ENCODE measurements at regions of chr10 and their contacts with region 1.

Region 1: GRCh38 chr10:12710594-12711349 is 290.7 kb downstream of the CCDC3 start:
- DNase-seq: peak; percentile 68
- ATAC-seq: peak; percentile 93
- H3K4me3 Mint-ChIP-seq: no peak overlapping the region
- H3K27ac Mint-ChIP-seq: peak overlapping the region; percentile 54
- H3K4me1 Mint-ChIP-seq: peaks cover 23% of the 10 kb centered on the region
- H3K27me3 Mint-ChIP-seq: no peaks in the 10 kb centered on the region
- CTCF ChIP-seq: no peak

Region 2: GRCh38 chr10:11782793-11783557 is 927.8 kb before region 1 on chr10:
- CTCF ChIA-PET with region 1: interaction called, 7 read pairs
- POLR2A ChIA-PET with region 1: no interaction called
- intact Hi-C with region 1: loop called (anchors 2 kb)
- DNase-seq: no peak
- ATAC-seq: peak; percentile 40
- H3K4me3 Mint-ChIP-seq: no peak overlapping the region
- H3K27ac Mint-ChIP-seq: no peak overlapping the region
- H3K4me1 Mint-ChIP-seq: no peaks in the 10 kb centered on the region
- H3K27me3 Mint-ChIP-seq: peaks cover 5% of the 10 kb centered on the region
- CTCF ChIP-seq: no peak

Region 3: DNA sequence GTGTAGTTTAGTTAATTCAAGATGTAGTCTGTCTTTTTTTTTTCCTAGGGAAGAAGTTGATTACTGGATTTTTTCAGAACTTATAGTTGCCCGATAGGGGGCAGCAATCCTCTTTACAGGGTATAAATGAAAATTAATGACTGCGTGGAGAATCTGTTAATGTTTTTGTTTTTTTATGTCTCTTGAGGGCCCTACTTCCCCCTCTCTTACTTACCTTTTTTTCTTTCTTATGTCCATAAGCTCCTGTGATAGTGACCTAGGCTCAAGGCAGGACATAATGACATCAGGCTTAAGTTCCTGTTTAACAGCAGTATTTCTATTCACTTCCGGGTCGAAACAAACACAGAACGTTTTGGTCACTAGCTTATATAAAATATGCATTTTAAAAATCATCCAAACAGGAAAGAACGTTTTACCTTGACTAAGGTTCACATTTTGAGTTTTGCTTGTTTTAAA is 496.0 kb before region 1 on chr10:
- CTCF ChIA-PET with region 1: interaction called, 65 read pairs
- POLR2A ChIA-PET with region 1: no interaction called
- intact Hi-C with region 1: loop called (anchors 1 kb)
- DNase-seq: no peak
- ATAC-seq: peak; percentile 42
- H3K4me3 Mint-ChIP-seq: peak overlapping the region; percentile 78
- H3K27ac Mint-ChIP-seq: peak overlapping the region; percentile 88
- H3K4me1 Mint-ChIP-seq: peaks cover 19% of the 10 kb centered on the region
- H3K27me3 Mint-ChIP-seq: no peaks in the 10 kb centered on the region
- CTCF ChIP-seq: peak; percentile 66

Region 4: DNA sequence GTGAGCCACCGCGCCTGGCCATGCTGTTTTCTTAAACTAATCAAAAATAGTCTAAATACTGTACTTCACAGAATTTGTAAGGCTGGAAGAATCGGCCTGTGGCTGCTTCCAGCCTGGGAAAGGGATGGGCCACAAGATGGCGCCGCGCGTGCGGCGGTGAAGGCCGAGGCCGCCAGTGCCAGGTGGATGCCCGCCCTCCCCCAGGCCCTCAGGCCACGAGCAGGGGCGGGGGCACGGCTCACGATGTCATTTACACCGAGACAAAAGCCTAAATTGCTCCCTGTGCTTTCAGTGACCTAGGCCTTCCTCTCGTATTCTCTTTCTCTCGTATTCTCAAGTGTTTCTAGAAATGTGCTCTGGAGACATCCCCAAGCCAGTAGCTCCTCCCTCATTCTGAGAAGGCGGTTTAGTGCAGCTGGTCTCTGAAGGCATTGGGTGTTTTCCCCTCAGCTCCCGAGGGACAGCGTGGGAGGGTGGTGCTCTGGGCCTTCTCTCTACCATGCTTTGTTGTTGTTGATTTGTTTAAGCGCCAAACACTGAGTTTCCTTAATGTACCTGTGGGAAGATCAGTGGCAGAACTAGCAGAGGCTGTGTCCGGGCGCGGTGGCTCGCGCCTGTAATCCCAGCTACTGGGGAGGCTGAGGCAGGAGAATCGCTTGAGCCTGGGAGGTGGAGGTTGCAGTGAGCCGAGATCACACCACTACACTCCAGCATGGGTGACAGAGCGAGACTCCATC is 446.4 kb before region 1 on chr10:
- CTCF ChIA-PET with region 1: interaction called, 9 read pairs
- POLR2A ChIA-PET with region 1: no interaction called
- intact Hi-C with region 1: loop called (anchors 1 kb)
- DNase-seq: peak; percentile 86
- ATAC-seq: peak; percentile 87
- H3K4me3 Mint-ChIP-seq: peak overlapping the region; percentile 83
- H3K27ac Mint-ChIP-seq: peak overlapping the region; percentile 100
- H3K4me1 Mint-ChIP-seq: peaks cover 58% of the 10 kb centered on the region
- H3K27me3 Mint-ChIP-seq: no peaks in the 10 kb centered on the region
- CTCF ChIP-seq: no peak

Region 5: GRCh38 chr10:12348870-12349628 is 361.7 kb before region 1 on chr10 and contains the start of gene CAMK1D:
- CTCF ChIA-PET with region 1: interaction called, 3 read pairs
- POLR2A ChIA-PET with region 1: no interaction called
- intact Hi-C with region 1: loop called (anchors 10 kb)
- DNase-seq: peak; percentile 87
- ATAC-seq: peak; percentile 66
- H3K4me3 Mint-ChIP-seq: peak within 1 kb of the TSS; percentile 98
- H3K27ac Mint-ChIP-seq: peak within 1 kb of the TSS; percentile 98
- H3K4me1 Mint-ChIP-seq: peaks cover 61% of the 10 kb centered on the region
- H3K27me3 Mint-ChIP-seq: no peaks in the 10 kb centered on the region
- CTCF ChIP-seq: no peak
- total RNA-seq, gene CAMK1D: 51.7 and 58.8 TPM in 2 replicates

Region 6: GRCh38 chr10:12566161-12567115 is 144.3 kb before region 1 on chr10:
- CTCF ChIA-PET with region 1: no interaction called
- POLR2A ChIA-PET with region 1: no interaction called
- intact Hi-C with region 1: no loop called
- DNase-seq: no peak
- ATAC-seq: no peak
- H3K4me3 Mint-ChIP-seq: no peak overlapping the region
- H3K27ac Mint-ChIP-seq: peak overlapping the region; percentile 53
- H3K4me1 Mint-ChIP-seq: peaks cover 66% of the 10 kb centered on the region
- H3K27me3 Mint-ChIP-seq: no peaks in the 10 kb centered on the region
- CTCF ChIP-seq: no peak

Region 7: DNA sequence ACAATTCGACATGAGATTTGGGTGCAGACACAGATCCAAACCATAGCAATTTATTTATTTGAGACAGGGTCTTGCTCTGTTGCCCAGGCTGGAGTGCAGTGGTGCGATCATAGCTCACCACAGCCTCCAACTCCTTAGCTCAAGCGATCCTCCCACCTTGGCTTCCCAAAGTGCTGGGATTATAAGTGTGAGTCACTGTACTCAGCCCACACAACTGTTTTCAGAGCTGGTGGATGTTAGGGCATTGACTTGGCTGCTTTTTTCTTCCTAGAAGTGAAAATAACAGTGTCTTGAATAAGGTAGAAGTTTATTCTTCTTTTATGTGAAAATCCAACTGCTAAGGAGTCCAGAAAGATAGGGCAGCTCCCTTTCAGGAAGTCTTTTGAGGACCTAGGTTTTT is 158.7 kb after region 1 on chr10:
- CTCF ChIA-PET with region 1: no interaction called
- POLR2A ChIA-PET with region 1: no interaction called
- intact Hi-C with region 1: no loop called
- DNase-seq: no peak
- ATAC-seq: no peak
- H3K4me3 Mint-ChIP-seq: no peak overlapping the region
- H3K27ac Mint-ChIP-seq: no peak overlapping the region
- H3K4me1 Mint-ChIP-seq: peaks cover 1% of the 10 kb centered on the region
- H3K27me3 Mint-ChIP-seq: peaks cover 1% of the 10 kb centered on the region
- CTCF ChIP-seq: no peak

Region 8: GRCh38 chr10:13440185-13441061 is 729.7 kb after region 1 on chr10:
- CTCF ChIA-PET with region 1: no interaction called
- POLR2A ChIA-PET with region 1: no interaction called
- intact Hi-C with region 1: no loop called
- DNase-seq: peak; percentile 65
- ATAC-seq: peak; percentile 91
- H3K4me3 Mint-ChIP-seq: peak overlapping the region; percentile 64
- H3K27ac Mint-ChIP-seq: no peak overlapping the region
- H3K4me1 Mint-ChIP-seq: peaks cover 11% of the 10 kb centered on the region
- H3K27me3 Mint-ChIP-seq: peaks cover 41% of the 10 kb centered on the region
- CTCF ChIP-seq: peak; percentile 26

Measured in activated B cell treated with CpG ODN at 0.5 μM for 24 hours (primary cell).